Heart left ventricle (tissue), 16 donors: ENCODE measurements at regions of chr6 and their contacts with region 1.

Region 1: DNA sequence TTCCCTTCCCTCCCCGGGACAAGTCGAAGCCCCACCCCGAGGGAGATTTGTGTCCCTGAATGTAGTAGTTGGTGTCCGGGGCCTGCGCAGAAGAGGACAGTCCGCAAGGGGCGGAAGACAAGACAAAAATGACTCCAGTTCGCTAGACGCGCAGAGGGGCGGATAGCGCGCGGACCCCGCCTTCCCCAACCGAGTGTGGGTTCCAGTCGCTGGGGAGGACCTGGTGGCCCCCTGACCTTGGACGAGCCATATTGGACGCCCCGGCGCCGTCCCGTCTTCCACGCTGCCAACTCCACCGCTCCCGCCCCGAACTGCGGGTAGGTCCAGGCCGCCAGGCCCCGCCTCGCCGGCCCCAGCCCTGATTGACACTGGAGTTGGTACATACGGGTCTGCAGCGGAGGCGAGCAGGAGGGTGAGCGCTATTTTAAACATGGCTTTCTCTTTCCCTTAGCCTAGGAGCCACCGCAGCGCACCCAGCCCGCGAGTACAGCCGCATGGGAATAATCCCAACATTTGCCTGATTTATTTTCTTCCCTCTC is 802 bp downstream of the HMGN3 start:
- DNase-seq: peak; percentile 89 to 96 (median 94)
- ATAC-seq: peak; percentile 96 to 97 (median 96)
- H3K4me3 ChIP-seq: peak overlapping the region; percentile 55 to 89 (median 74)
- H3K27ac ChIP-seq: peak overlapping the region; percentile 86 to 98 (median 92)
- H3K4me1 ChIP-seq: peaks cover 0 to 25% (median 11%) of the 10 kb centered on the region in 12 donors
- H3K27me3 ChIP-seq: no peaks in the 10 kb centered on the region
- CTCF ChIP-seq: peak in 10 of 12 donors; percentile 16 to 63 (median 36)
- POLR2A ChIP-seq: peak; percentile 19 to 70

Region 2: DNA sequence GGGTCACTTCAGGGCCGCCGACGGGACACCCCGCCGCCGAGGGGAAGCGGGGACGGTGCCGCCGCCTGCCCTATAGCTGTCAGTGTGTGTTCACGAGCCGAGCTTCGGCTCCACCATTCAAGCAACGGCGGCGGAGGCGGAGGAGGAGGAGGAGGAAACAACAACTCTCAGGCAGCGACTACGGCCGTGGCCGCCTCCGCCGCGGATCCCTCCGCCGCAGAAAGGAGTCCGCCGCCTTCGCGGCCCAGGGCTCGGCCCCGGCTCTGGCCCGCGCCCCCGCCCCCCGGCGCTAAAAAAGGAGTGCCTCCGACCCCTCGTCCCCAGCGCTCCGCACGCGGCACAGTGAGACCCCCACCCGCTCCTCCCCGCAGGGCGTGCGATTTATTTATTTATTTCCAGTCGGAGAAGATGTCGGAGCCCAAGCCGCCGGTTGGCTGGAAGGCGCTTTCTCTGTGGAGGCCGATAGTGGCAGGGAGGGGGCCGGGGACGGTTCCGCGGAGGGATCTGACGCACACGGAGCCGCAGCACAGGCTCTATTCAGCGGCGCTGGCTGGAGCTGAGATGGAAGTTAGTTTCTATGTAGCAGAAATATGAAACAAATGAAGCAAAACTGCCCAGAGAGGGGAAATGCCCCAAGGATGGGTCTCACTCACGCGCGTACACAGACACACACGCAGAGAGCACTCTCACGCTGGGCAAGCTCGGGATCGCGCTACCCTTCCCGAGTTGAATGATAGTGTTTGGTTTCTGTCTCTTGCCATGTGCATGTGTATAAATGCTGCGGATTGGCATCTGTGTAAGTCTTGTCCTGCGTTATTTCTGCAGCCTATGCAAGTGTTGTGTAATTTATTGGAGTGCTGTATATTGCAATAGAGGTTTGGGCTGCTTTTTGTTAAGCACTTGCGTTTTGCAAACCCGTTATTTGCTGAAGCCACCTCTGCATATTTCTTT is 155.3 kb before region 1 on chr6 and contains the start of gene PHIP:
- intact Hi-C with region 1: loop called (anchors 1 to 10 kb)
- DNase-seq: peak; percentile 95 to 96 (median 96)
- ATAC-seq: peak; percentile 91 to 95 (median 92)
- H3K4me3 ChIP-seq: peak within 1 kb of the TSS; percentile 69 to 94 (median 88)
- H3K27ac ChIP-seq: peak within 1 kb of the TSS; percentile 97 to 100 (median 98)
- H3K4me1 ChIP-seq: peaks cover 8 to 43% (median 31%) of the 10 kb centered on the region in 12 donors
- H3K27me3 ChIP-seq: no peaks in the 10 kb centered on the region
- CTCF ChIP-seq: peak in 3 of 12 donors; percentile 8 to 12 (median 8)
- POLR2A ChIP-seq: peak in 1 of 2 donors; percentile 15
- total RNA-seq, gene PHIP: 10.1 to 18.9 (median 15.3) TPM

Region 3: DNA sequence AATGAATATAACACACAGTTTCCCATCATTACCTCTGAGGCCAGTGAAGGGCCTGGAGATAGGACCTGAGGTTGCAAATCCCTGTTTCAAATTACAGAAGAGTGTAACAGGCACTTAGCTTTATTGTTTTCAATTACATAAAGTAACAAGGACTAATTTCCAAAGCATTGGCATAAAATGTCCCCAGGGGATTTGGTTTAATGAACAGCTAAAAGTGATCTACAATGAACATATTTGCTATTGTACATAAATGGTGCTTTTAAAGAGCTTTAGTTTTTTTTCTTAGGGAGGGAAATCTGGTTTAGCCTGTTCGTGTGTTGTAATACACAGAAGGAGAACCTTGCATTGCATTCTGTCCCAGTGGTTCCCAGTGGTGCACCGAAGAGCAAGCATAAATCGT is 53.6 kb before region 1 on chr6:
- intact Hi-C with region 1: loop called in 1 of 10 experiments (anchors 2 kb)
- DNase-seq: no peak
- ATAC-seq: no peak
- H3K4me3 ChIP-seq: no peak overlapping the region
- H3K27ac ChIP-seq: no peak overlapping the region
- H3K4me1 ChIP-seq: no peaks in the 10 kb centered on the region
- H3K27me3 ChIP-seq: no peaks in the 10 kb centered on the region
- CTCF ChIP-seq: no peak
- POLR2A ChIP-seq: no peak

Region 4: GRCh38 chr6:79335133-79335674 is 101.5 kb after region 1 on chr6:
- intact Hi-C with region 1: no loop called
- DNase-seq: no peak
- ATAC-seq: no peak
- H3K4me3 ChIP-seq: no peak overlapping the region
- H3K27ac ChIP-seq: no peak overlapping the region
- H3K4me1 ChIP-seq: no peaks in the 10 kb centered on the region
- H3K27me3 ChIP-seq: no peaks in the 10 kb centered on the region
- CTCF ChIP-seq: no peak
- POLR2A ChIP-seq: no peak

Region 5: DNA sequence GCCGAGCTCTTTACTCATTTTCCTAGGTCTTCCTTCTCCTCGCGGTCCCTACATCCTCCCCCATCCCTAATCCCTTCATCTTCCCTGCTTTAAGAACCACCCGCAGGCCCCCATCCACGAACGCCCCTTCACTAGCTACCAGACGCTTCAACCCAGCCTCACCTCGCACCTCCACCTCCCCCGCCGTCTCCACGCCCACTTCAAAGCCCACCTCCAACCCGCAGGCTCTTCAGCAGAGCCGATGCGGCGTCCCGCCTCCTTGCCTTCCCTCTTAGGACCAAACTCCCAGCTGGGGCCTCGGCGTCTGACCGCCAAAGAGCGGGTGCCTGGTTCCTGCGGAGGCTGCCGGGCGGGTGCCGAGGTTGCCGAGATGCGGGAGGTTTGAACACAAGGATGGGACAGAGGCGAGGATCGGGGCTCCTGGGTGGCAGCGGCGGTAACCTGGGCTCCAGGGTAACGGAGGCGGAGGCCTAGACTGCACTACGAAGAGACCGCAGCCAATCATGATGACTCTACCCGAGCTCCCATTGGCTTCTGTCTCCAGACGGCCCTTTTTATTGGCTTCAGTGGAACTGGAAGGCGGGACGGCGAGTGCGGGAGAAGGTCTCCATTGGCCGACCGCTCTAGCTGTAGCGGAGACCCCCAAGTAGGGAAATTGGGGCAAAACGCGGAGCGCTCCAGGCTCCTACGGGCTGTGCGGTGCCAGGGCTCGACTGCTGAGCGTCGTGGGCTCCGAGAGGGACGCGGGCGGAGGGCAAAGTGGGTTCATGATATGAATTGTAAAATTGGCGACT is 303.5 kb after region 1 on chr6 and contains the start of gene LCA5:
- intact Hi-C with region 1: loop called in 8 of 10 experiments (anchors 2 to 10 kb)
- DNase-seq: peak; percentile 92 to 96 (median 95)
- ATAC-seq: peak; percentile 98 to 100 (median 99)
- H3K4me3 ChIP-seq: peak within 1 kb of the TSS; percentile 61 to 90 (median 80)
- H3K27ac ChIP-seq: peak within 1 kb of the TSS; percentile 61 to 93 (median 86)
- H3K4me1 ChIP-seq: peaks cover 0 to 24% (median 8%) of the 10 kb centered on the region in 12 donors
- H3K27me3 ChIP-seq: no peaks in the 10 kb centered on the region
- CTCF ChIP-seq: no peak
- POLR2A ChIP-seq: peak in 1 of 2 donors; percentile 54
- total RNA-seq, gene LCA5: 1.2 to 3.6 (median 2.2) TPM

Region 6: DNA sequence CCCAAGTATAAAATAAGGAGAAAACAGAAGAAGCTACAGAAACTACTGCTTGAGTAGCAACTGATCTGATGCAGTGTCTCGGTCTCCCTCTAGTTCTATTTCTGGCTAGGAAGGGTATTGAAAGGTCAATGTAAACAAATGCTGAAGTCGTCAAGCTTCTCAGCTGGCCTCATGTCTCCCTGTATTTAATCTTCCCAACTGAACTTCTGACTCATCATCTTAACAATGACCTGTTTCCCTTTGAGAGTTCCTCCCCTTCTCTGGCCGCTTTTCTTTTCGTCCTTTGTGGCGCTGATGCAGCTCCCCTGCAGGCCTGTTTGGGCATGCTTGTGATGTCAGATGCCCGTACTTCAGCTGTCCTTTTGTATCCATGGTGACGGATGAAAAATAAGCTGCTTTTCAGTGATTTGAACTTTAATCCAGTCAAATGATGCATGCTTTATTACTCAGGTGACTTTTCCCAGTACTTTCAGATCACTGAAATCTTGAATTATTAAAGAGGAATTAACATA is 311.3 kb after region 1 on chr6:
- intact Hi-C with region 1: loop called in 1 of 10 experiments (anchors 10 kb)
- DNase-seq: peak; percentile 57 to 82 (median 66)
- ATAC-seq: peak; percentile 76 to 96 (median 96)
- H3K4me3 ChIP-seq: peak overlapping the region in 9 of 12 donors; percentile 4 to 34 (median 29)
- H3K27ac ChIP-seq: peak overlapping the region in 11 of 12 donors; percentile 33 to 75 (median 54)
- H3K4me1 ChIP-seq: peaks cover 0 to 30% (median 19%) of the 10 kb centered on the region in 12 donors
- H3K27me3 ChIP-seq: no peaks in the 10 kb centered on the region
- CTCF ChIP-seq: peak; percentile 7 to 76 (median 49)
- POLR2A ChIP-seq: no peak

Region 7: GRCh38 chr6:79657238-79657637 is 423.6 kb after region 1 on chr6:
- intact Hi-C with region 1: no loop called
- DNase-seq: no peak
- ATAC-seq: no peak
- H3K4me3 ChIP-seq: no peak overlapping the region
- H3K27ac ChIP-seq: no peak overlapping the region
- H3K4me1 ChIP-seq: peaks cover 0 to 3% (median 0%) of the 10 kb centered on the region in 12 donors
- H3K27me3 ChIP-seq: no peaks in the 10 kb centered on the region
- CTCF ChIP-seq: no peak
- POLR2A ChIP-seq: no peak

Region 8: GRCh38 chr6:80106418-80107235 is 872.9 kb after region 1 on chr6 and contains the start of gene BCKDHB:
- intact Hi-C with region 1: loop called in 1 of 10 experiments (anchors 10 kb)
- DNase-seq: peak; percentile 97 to 99 (median 99)
- ATAC-seq: peak; percentile 99 to 100 (median 100)
- H3K4me3 ChIP-seq: peak within 1 kb of the TSS; percentile 45 to 96 (median 84)
- H3K27ac ChIP-seq: peak within 1 kb of the TSS; percentile 43 to 95 (median 82)
- H3K4me1 ChIP-seq: peaks cover 0 to 25% (median 7%) of the 10 kb centered on the region in 12 donors
- H3K27me3 ChIP-seq: no peaks in the 10 kb centered on the region
- CTCF ChIP-seq: peak in 2 of 12 donors; percentile 3 to 14
- POLR2A ChIP-seq: peak; percentile 29 to 95
- total RNA-seq, gene BCKDHB: 17.3 to 41.9 (median 31.0) TPM

Region 9: GRCh38 chr6:80304014-80304413 is 1070.3 kb after region 1 on chr6:
- intact Hi-C with region 1: no loop called
- DNase-seq: no peak
- ATAC-seq: no peak
- H3K4me3 ChIP-seq: no peak overlapping the region
- H3K27ac ChIP-seq: no peak overlapping the region
- H3K4me1 ChIP-seq: no peaks in the 10 kb centered on the region
- H3K27me3 ChIP-seq: no peaks in the 10 kb centered on the region
- CTCF ChIP-seq: no peak
- POLR2A ChIP-seq: no peak